ENCODE measurements at regions of chr6 and their contacts with region 1.

Region 1: DNA sequence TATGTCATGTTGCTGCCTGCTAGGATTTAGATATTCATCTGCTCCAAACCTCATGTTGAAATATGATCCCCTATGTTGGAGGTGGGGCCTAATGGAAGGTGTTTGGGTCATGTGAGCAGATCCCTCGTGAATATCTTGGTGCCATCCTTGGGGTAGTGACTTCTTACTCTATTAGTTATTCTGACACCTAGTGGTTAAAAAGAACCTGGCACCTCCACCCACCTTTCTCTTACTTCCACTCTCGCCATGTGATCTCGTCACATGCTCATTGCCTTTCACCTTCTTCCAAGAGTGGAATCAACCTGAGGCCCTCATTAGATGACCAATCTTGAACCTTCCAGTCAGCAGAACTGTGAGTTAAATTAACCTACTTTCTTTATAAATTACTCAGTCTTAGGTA is 549.4 kb upstream of the SYNCRIP start:
- DNase-seq: peak; percentile 42
- ATAC-seq: peak; percentile 63; the same call in 1 of the 2 replicates
- H3K4me3 ChIP-seq: no peak overlapping the region
- H3K27ac ChIP-seq: no peak overlapping the region
- H3K4me1 ChIP-seq: no peaks in the 10 kb centered on the region
- H3K27me3 ChIP-seq: no peaks in the 10 kb centered on the region
- CTCF ChIP-seq: peak; percentile 58

Region 2: DNA sequence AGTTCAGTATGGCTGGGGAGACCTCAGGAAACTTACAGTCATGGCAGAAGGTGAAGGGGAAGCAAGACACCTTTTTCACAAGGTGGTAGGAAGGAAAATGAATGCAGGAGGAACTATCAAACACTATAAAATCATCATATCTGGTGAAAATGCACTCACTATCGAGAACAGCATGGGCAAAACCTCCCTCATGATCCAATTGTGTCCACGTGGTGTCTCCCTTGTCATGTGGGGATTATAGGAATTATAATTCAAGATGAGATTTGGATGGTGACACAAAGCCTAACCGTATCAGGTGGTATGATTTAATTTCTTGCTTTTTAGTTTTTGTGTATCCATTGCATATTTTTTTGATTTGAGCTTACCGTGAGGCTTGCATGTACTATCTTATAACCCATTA is 416.2 kb before region 1 on chr6:
- CTCF ChIA-PET with region 1: no interaction called
- POLR2A ChIA-PET with region 1: no interaction called
- intact Hi-C with region 1: loop called (anchors 1 kb)
- DNase-seq: peak; percentile 49
- ATAC-seq: peak; percentile 69
- H3K4me3 ChIP-seq: no peak overlapping the region
- H3K27ac ChIP-seq: no peak overlapping the region
- H3K4me1 ChIP-seq: no peaks in the 10 kb centered on the region
- H3K27me3 ChIP-seq: no peaks in the 10 kb centered on the region
- CTCF ChIP-seq: peak; percentile 51